ENCODE measurements at regions of chr3 and their contacts with region 1.

Region 1: DNA sequence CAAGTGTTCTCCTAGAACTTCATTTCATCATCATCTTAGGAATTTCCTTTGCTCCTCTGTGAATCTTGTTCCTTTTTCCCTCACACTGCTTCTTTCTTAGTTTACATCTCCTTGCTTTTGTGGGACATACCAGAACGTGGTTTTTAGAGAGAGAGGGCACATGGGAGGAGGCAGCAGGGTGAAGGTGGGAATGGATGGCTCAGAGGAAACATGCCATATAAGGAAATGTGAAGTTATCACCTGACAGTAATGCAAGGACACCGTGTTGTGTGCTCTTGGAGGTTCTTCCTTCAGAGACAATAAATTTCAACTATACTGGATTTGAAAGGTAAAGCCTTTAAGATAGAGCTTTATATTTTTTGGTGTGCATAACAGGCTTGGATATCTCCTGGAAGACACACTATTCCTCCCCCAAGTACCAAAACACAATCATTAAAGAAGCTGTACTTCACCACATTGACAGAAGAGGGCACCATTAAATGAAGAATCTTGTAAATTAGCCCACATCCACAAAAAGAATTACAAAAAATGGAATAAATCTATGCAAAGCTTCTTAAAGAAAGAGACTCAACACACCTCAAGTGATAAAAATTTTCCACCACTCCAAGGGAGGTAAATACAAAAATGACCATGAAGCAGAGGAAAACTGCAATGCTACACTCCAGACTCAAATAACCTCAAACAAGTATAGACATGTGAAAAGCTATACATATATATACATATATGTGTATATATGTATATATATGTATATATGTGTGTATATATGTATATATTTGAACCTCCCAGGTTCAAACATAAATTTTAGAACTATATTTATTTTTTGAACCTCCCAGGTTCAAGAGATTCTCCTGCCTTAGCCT is 26.1 kb downstream of the RPL39L start:
- DNase-seq: peak in 6 of 9 donors; percentile 16 to 59 (median 48)
- ATAC-seq: peak; percentile 70
- H3K4me3 ChIP-seq: no peak overlapping the region
- H3K4me3 Mint-ChIP-seq: peak overlapping the region in 1 of 10 donors; percentile 13
- H3K27ac ChIP-seq: no peak overlapping the region
- H3K27ac Mint-ChIP-seq: no peak overlapping the region
- H3K4me1 ChIP-seq: no peaks in the 10 kb centered on the region
- H3K4me1 Mint-ChIP-seq: peaks cover 0 to 9% (median 6%) of the 10 kb centered on the region in 7 donors
- H3K27me3 ChIP-seq: no peaks in the 10 kb centered on the region
- H3K27me3 Mint-ChIP-seq: no peaks in the 10 kb centered on the region

Region 2: GRCh38 chr3:187101184-187102072 is 11.7 kb before region 1 on chr3:
- CTCF ChIA-PET with region 1: interaction called, 20 read pairs
- POLR2A ChIA-PET with region 1: no interaction called
- intact Hi-C with region 1: no loop called
- DNase-seq: peak; percentile 11 to 51 (median 38)
- ATAC-seq: peak; percentile 76
- H3K4me3 ChIP-seq: peak overlapping the region; percentile 34
- H3K4me3 Mint-ChIP-seq: peak overlapping the region; percentile 62 to 89 (median 78)
- H3K27ac ChIP-seq: no peak overlapping the region
- H3K27ac Mint-ChIP-seq: peak overlapping the region; percentile 52 to 89 (median 72)
- H3K4me1 ChIP-seq: peaks cover 18 to 20% of the 10 kb centered on the region in 2 donors
- H3K4me1 Mint-ChIP-seq: peaks cover 15 to 40% (median 26%) of the 10 kb centered on the region in 7 donors
- H3K27me3 ChIP-seq: no peaks in the 10 kb centered on the region
- H3K27me3 Mint-ChIP-seq: no peaks in the 10 kb centered on the region

Region 3: GRCh38 chr3:187130346-187131066 is 17.3 kb after region 1 on chr3:
- CTCF ChIA-PET with region 1: interaction called, 17 read pairs
- POLR2A ChIA-PET with region 1: interaction called, 4 read pairs
- intact Hi-C with region 1: loop called in 1 of 2 experiments (anchors 1 kb)
- DNase-seq: peak in 7 of 9 donors; percentile 61 to 86 (median 81)
- ATAC-seq: peak; percentile 99
- H3K4me3 ChIP-seq: no peak overlapping the region
- H3K4me3 Mint-ChIP-seq: peak overlapping the region; percentile 43 to 86 (median 74)
- H3K27ac ChIP-seq: peak overlapping the region; percentile 68
- H3K27ac Mint-ChIP-seq: peak overlapping the region; percentile 95 to 99 (median 97)
- H3K4me1 ChIP-seq: peaks cover 19 to 22% of the 10 kb centered on the region in 2 donors
- H3K4me1 Mint-ChIP-seq: peaks cover 12 to 49% (median 25%) of the 10 kb centered on the region in 7 donors
- H3K27me3 ChIP-seq: no peaks in the 10 kb centered on the region
- H3K27me3 Mint-ChIP-seq: no peaks in the 10 kb centered on the region

Region 4: DNA sequence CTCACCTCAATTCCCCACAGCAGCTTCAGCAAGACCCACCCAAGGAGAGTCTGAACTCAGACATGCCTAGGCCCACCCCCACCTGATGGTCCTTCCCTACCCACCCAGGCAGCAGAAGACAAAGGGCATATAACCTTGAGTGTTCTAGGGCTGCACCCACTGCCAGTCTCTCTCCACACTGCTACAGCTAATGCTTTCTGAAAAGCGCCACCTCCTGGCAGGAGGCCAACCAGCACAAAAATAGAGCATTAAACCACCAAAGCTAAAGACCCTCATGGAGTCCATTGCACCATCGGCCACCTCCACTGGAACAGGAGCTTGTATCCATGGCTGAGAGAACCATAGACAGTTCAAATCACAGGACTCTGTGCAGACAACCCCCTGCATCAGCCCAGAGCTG is 37.4 kb after region 1 on chr3:
- CTCF ChIA-PET with region 1: interaction called, 51 read pairs
- POLR2A ChIA-PET with region 1: interaction called, 5 read pairs
- intact Hi-C with region 1: loop called (anchors 1 kb)
- DNase-seq: peak; percentile 30 to 57 (median 43)
- ATAC-seq: peak; percentile 60
- H3K4me3 ChIP-seq: no peak overlapping the region
- H3K4me3 Mint-ChIP-seq: no peak overlapping the region
- H3K27ac ChIP-seq: no peak overlapping the region
- H3K27ac Mint-ChIP-seq: peak overlapping the region in 1 of 9 donors; percentile 38
- H3K4me1 ChIP-seq: no peaks in the 10 kb centered on the region
- H3K4me1 Mint-ChIP-seq: peaks cover 0 to 32% (median 10%) of the 10 kb centered on the region in 7 donors
- H3K27me3 ChIP-seq: no peaks in the 10 kb centered on the region
- H3K27me3 Mint-ChIP-seq: peaks cover 0 to 48% (median 0%) of the 10 kb centered on the region in 5 donors